HAP-1 (cell line): ENCODE measurements at regions of chr4 and their contacts with region 1.

Region 1: GRCh38 chr4:82462415-82462831 is 32.0 kb downstream of the ENOPH1 start:
- DNase-seq: peak; percentile 73 to 91
- H3K4me3 ChIP-seq: no peak overlapping the region
- H3K4me1 ChIP-seq: peaks cover 9% of the 10 kb centered on the region
- H3K27me3 ChIP-seq: no peaks in the 10 kb centered on the region

Region 2: GRCh38 chr4:81676537-81676936 is 785.9 kb before region 1 on chr4:
- in situ Hi-C with region 1: no loop called
- DNase-seq: no peak
- H3K4me3 ChIP-seq: no peak overlapping the region
- H3K4me1 ChIP-seq: no peaks in the 10 kb centered on the region
- H3K27me3 ChIP-seq: peaks cover 5% of the 10 kb centered on the region

Region 3: GRCh38 chr4:82601242-82602015 is 139.0 kb after region 1 on chr4:
- in situ Hi-C with region 1: no loop called
- DNase-seq: no peak
- H3K4me3 ChIP-seq: no peak overlapping the region
- H3K4me1 ChIP-seq: no peaks in the 10 kb centered on the region
- H3K27me3 ChIP-seq: no peaks in the 10 kb centered on the region

Region 4: GRCh38 chr4:82694046-82694445 is 231.6 kb after region 1 on chr4:
- in situ Hi-C with region 1: no loop called
- DNase-seq: no peak
- H3K4me3 ChIP-seq: no peak overlapping the region
- H3K4me1 ChIP-seq: no peaks in the 10 kb centered on the region
- H3K27me3 ChIP-seq: no peaks in the 10 kb centered on the region

Region 5: GRCh38 chr4:82739316-82740179 is 277.1 kb after region 1 on chr4:
- in situ Hi-C with region 1: loop called (anchors 5 kb)
- DNase-seq: peak; percentile 51 to 90
- H3K4me3 ChIP-seq: no peak overlapping the region
- H3K4me1 ChIP-seq: no peaks in the 10 kb centered on the region; the same call in 1 of the 2 replicates
- H3K27me3 ChIP-seq: no peaks in the 10 kb centered on the region

Region 6: DNA sequence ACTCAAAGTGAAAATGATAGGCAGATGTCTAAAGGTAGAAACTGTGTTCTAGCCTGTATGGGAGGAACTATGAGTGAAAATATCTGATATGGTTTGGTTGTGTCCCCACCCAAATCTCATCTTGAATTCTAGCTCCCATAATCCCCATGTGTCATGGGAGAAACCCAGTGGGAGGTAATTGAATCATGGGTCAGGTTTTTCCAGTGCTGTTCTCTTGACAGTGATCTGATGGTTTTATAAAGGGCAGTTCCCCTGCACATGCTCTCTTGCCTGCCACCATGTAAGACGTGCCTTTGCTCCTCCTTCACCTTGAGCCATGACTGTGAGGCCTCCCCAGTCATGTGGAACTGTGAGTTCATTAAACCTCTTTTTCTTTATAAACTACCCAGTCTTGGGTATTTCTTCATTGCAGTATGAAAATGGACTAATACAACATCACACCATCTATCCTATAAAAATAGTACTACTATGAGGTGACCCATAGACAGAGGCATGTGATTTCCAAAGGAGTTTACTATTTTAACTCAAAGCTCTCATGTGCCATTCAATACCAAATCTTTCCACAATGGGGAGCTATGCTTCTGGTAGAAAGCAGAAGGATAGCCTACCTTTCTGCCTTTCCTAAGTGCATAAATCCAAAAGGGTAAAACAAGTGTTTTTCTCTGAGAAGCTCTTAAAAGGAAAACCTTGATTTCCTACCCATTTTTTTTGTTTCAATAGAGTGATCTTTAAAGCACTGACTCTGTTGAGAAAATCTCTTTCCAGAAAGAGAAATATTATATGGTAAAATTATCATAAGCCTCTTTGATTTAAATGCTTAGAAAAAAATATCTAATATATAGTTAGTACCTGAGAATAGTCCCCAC is 389.7 kb after region 1 on chr4:
- in situ Hi-C with region 1: loop called (anchors 25 kb)
- DNase-seq: peak in 1 of 2 experiments; percentile 12
- H3K4me3 ChIP-seq: no peak overlapping the region
- H3K4me1 ChIP-seq: no peaks in the 10 kb centered on the region
- H3K27me3 ChIP-seq: no peaks in the 10 kb centered on the region

Region 7: DNA sequence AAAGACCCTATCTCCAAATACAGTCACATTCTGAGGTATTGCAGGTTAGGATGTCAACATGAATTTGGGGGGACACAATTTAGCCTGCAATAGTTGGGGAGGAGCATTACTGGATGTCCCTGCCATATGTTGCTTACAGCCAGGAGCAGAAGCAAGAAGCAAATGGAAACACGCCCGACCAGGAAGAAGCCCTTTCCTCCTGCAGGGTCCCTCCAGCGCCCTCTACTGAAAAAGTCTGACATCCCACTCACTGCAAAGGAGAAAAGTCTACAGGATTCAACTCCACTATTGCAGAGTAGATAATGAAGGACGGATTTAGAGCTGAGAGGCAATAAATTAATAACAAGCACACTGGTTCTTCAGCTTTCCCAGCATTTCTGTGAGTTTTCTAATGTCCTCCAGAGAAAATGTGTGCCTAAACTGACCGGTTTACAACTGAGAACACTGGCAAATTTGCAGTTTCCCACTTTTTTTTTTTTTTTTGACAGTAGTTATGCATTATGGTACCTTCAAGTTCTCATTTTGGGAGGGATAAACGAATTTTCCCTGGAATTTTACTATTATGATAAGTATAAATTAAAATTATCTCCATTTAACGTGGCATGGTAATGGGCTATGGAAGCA is 790.5 kb after region 1 on chr4:
- in situ Hi-C with region 1: loop called (anchors 25 kb)
- DNase-seq: peak; percentile 46 to 81
- H3K4me3 ChIP-seq: no peak overlapping the region
- H3K4me1 ChIP-seq: peaks cover 10% of the 10 kb centered on the region
- H3K27me3 ChIP-seq: no peaks in the 10 kb centered on the region